Dorsolateral prefrontal cortex (tissue), 120 donors: ENCODE measurements at regions of chr3 and their contacts with region 1.

Region 1: DNA sequence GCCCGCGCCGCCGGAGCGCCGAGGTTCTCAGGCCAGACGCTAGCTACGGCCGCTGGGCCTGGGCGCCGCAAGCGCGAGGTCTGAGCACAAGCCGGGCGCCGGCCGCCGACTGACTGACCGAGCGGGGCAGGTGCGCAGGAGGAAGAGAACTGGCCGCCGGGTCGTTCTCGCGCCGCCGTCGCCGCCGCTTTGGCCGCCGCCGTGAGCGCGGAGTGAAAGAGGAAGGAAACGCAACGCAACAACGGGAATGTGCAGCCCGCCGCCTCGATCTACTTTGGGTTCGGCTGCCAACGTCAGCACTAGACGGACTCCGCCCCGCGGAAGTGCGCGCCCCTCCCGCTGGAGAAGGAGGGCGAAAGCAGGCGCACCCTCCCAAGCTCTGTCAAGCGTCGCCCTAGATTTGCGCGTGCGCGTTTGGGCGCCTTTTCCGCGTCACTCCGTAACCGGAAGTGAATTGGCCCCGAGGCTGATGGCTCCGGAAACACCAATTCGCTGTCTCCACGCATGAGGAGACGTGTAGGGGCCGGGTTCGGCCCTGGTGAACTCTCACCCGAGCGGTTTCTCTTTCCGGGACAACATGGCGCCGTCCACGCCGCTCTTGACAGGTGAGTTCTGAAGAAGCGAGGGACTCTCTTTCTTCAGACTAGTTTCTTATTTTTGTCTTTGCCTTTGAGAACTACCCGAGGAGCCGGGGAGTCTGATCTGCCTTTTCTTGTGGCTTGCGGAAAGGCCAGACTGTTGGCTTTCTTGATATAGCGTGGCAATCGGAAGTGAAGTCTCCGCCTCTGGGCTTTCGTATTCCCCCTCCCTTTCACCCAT is at the starts of genes EIF2A and SERP1:
- DNase-seq: peak; percentile 97 to 99 (median 98)
- H3K4me3 ChIP-seq: peak within 1 kb of the TSS; percentile 66 to 99 (median 93)
- H3K27ac ChIP-seq: peak within 1 kb of the TSS; percentile 72 to 99 (median 97)
- H3K27me3 ChIP-seq: no peaks in the 10 kb centered on the region
- CTCF ChIP-seq: peak in 32 of 56 donors; percentile 2 to 49 (median 24)
- total RNA-seq, gene EIF2A: 32.6 to 75.9 (median 53.3) TPM
- total RNA-seq, gene SERP1: 44.6 to 110 (median 64.5) TPM

Region 2: DNA sequence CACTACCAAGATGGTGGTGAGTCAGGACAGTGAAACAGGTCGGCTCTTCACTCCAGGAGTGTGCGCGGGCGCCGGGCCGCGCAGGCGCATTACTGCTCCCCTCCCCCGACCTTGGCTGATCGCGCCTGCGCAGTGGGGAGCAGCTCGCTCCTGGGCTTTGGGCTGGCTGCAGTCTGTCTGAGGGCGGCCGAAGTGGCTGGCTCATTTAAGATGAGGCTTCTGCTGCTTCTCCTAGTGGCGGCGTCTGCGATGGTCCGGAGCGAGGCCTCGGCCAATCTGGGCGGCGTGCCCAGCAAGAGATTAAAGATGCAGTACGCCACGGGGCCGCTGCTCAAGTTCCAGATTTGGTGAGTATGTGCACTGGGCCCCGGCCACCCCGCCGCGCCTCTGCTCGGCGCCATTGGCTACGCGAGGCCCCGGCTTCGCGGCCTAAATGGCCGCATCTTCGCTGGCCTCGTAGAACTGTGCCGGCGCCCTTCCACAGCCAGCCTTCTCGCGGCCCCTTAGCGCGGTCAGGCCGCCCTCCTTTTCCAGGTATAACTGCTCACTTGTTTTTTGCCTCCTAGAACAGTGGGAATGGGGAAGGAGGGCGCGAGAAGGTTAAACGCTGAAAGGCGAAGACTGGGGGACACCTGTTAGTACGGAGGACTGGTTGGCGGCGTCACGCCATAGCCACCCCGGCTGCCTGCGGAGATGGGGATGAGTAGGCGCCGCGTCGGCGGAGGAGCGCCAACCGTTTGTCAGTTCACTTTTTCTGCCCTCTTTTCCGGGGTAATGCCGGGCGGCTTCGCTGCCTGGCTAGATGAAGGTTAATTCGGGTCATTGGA is 56.9 kb after region 1 on chr3 and contains the start of gene SELENOT:
- intact Hi-C with region 1: loop called (anchors 1 to 2 kb)
- DNase-seq: peak; percentile 83 to 96 (median 90)
- H3K4me3 ChIP-seq: peak within 1 kb of the TSS; percentile 61 to 98 (median 84)
- H3K27ac ChIP-seq: peak within 1 kb of the TSS; percentile 82 to 99 (median 96)
- H3K27me3 ChIP-seq: no peaks in the 10 kb centered on the region
- CTCF ChIP-seq: peak in 39 of 56 donors; percentile 2 to 65 (median 35)
- total RNA-seq, gene SELENOT: 78.5 to 150 (median 109) TPM

Region 3: DNA sequence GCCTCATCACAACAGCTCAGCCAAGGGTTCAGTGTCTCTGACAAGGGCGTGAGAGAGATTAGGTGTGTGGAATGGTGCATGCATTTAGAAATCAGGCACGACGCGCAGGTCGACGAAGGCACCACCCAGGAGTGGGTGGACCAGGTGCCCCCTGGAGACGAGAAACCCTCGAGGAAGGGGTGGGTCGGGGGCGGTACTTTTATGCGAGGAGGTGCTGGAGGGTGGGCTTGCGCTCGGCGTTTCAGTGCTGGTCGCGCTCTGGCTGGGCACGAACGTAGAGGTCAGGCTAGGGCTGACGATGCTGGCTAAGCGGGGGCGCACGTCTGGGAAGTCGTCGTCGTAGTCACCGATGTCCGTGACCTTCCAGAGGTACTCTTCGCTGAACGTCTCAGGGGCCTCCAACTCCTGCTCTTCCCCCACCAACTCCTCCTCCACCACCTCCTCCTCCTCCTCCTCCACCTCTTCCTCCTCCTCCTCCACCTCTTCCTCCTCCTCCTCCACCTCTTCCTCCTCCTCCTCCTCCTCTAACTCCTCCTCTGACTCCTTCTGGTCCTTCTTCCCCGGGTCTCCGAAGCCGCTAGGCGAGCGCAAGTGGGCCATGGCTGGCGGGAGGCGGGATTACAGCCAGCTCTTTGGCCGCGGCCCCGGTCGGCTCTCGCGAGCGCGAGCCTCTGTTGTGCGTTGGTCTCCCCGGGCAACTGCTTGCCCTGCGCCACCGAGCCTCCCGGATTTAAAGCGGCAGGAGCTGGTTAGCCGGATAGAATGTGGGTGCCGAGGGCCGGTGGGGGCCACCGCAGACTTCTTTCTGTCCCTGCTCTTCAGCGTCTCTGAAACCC is 157.1 kb after region 1 on chr3 and contains the start of gene ERICH6:
- intact Hi-C with region 1: loop called in 1 of 2 experiments (anchors 10 kb)
- DNase-seq: peak; percentile 67 to 92 (median 88)
- H3K4me3 ChIP-seq: peak within 1 kb of the TSS; percentile 44 to 87 (median 73)
- H3K27ac ChIP-seq: peak within 1 kb of the TSS in 51 of 59 donors; percentile 17 to 89 (median 72)
- H3K27me3 ChIP-seq: no peaks in the 10 kb centered on the region
- CTCF ChIP-seq: peak in 17 of 56 donors; percentile 12 to 39 (median 21)
- total RNA-seq, gene ERICH6: 0.23 to 2.5 (median 0.63) TPM in 81 of 120 experiments, not detected in the others